Dorsolateral prefrontal cortex (tissue), 120 donors: ENCODE measurements at regions of chr6 and their contacts with region 1.

Region 1: GRCh38 chr6:160455541-160456213 is 107.5 kb downstream of the SLC22A3 start:
- DNase-seq: peak in 9 of 10 donors; percentile 12 to 77 (median 55)
- H3K4me3 ChIP-seq: peak overlapping the region in 49 of 59 donors; percentile 6 to 58 (median 32)
- H3K27ac ChIP-seq: peak overlapping the region in 16 of 59 donors; percentile 6 to 70 (median 45)
- H3K27me3 ChIP-seq: no peaks in the 10 kb centered on the region
- CTCF ChIP-seq: peak; percentile 73 to 99 (median 96)

Region 2: GRCh38 chr6:159862103-159862502 is 593.6 kb before region 1 on chr6:
- intact Hi-C with region 1: loop called (anchors 5 to 10 kb)
- DNase-seq: no peak
- H3K4me3 ChIP-seq: no peak overlapping the region
- H3K27ac ChIP-seq: no peak overlapping the region
- H3K27me3 ChIP-seq: peaks cover 0 to 9% (median 0%) of the 10 kb centered on the region in 45 donors
- CTCF ChIP-seq: no peak

Region 3: DNA sequence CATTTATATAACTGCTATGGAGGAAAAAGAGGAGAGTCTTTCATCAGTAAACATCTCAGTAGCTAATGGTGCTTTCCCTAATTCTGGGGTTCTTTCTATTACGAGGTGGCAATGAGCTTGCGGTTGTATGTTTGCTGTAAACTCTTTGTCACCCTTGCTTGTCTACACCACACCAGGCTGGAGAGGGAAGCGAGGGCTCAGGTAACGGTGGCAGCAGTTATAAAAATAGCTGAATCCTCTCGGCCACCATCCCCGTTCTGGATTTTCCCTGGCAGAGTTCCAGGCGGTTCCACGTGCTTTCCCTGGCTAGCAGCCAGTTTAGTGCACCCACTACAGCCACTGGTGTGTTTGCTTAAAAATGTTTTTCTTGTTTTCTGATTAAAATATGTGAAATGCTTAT is 525.9 kb before region 1 on chr6:
- intact Hi-C with region 1: loop called in 1 of 2 experiments (anchors 10 kb)
- DNase-seq: no peak
- H3K4me3 ChIP-seq: no peak overlapping the region
- H3K27ac ChIP-seq: no peak overlapping the region
- H3K27me3 ChIP-seq: no peaks in the 10 kb centered on the region
- CTCF ChIP-seq: no peak

Region 4: DNA sequence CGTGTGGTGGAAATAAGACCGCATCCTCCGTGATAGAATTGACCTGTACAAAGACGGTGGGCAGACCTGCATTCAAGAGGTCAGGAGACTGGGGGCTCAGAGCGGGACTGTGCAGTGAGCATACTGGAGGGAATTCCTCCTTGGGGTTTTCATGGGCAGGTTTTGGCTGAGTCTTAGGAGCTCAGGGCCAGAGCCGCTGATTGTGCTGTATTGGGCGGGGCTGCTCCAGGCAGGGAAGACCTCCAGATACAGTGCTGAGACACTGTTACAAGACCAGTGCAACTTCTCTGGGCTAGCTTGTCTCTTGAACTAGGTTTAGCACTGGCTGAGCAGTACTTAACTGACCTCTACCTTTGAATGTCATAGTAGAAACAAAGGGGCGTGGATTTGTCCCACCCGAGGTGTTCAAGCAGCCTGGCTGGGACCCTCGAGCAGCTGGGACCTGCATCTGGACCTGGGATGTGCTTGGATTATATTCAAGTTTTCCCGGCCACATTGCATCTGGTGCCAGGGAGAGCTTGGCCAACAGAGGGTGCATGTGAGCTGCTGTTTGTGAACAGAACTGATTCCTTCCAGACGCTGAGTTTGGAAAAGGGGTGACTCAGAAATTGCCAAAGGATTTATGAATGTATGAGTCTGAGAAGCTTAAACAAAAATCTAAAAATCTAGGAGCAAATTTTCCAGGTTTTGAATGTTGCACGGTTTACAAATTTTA is 367.5 kb before region 1 on chr6:
- intact Hi-C with region 1: loop called (anchors 2 to 5 kb)
- DNase-seq: peak in 9 of 10 donors; percentile 23 to 75 (median 66)
- H3K4me3 ChIP-seq: peak overlapping the region in 1 of 59 donors; percentile 7
- H3K27ac ChIP-seq: peak overlapping the region in 5 of 59 donors; percentile 11 to 65 (median 35)
- H3K27me3 ChIP-seq: no peaks in the 10 kb centered on the region
- CTCF ChIP-seq: peak in 55 of 56 donors; percentile 34 to 80 (median 67)

Region 5: GRCh38 chr6:160137989-160138835 is 317.5 kb before region 1 on chr6:
- intact Hi-C with region 1: loop called (anchors 2 to 5 kb)
- DNase-seq: peak in 5 of 10 donors; percentile 28 to 64 (median 60)
- H3K4me3 ChIP-seq: no peak overlapping the region
- H3K27ac ChIP-seq: no peak overlapping the region
- H3K27me3 ChIP-seq: no peaks in the 10 kb centered on the region
- CTCF ChIP-seq: peak; percentile 48 to 80 (median 69)

Region 6: GRCh38 chr6:160328447-160328846 is 127.2 kb before region 1 on chr6:
- intact Hi-C with region 1: no loop called
- DNase-seq: no peak
- H3K4me3 ChIP-seq: no peak overlapping the region
- H3K27ac ChIP-seq: peak overlapping the region in 1 of 59 donors; percentile 4
- H3K27me3 ChIP-seq: peaks cover 0 to 16% (median 0%) of the 10 kb centered on the region in 45 donors
- CTCF ChIP-seq: no peak

Region 7: DNA sequence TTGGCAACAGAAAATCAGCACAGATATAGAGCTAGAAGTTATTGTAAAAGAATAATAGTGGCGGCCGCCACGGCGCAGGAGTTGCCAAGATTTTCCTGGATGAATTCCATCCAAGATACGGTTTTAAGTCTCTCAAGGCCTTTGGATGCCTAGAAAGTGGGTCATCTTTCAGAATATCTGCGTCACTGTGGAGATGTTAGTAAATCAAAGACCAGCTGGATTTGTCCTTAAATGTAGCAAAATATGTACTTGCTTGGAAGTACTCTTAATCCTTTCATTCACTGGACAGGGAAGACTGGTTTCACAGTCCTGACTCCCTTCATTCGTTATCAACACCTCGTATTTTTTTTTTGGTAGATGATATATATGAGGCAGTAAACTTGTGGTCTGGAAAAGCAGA is 24.5 kb before region 1 on chr6:
- intact Hi-C with region 1: no loop called
- DNase-seq: no peak
- H3K4me3 ChIP-seq: no peak overlapping the region
- H3K27ac ChIP-seq: peak overlapping the region in 11 of 59 donors; percentile 0 to 37 (median 8)
- H3K27me3 ChIP-seq: peaks cover 0 to 28% (median 0%) of the 10 kb centered on the region in 45 donors
- CTCF ChIP-seq: no peak

Region 8: GRCh38 chr6:160534050-160534696 is 78.5 kb after region 1 on chr6:
- intact Hi-C with region 1: loop called (anchors 1 kb)
- DNase-seq: peak in 9 of 10 donors; percentile 16 to 68 (median 47)
- H3K4me3 ChIP-seq: peak overlapping the region in 42 of 59 donors; percentile 1 to 59 (median 30)
- H3K27ac ChIP-seq: no peak overlapping the region
- H3K27me3 ChIP-seq: peaks cover 0 to 3% (median 0%) of the 10 kb centered on the region in 45 donors
- CTCF ChIP-seq: peak; percentile 85 to 99 (median 96)

Region 9: GRCh38 chr6:160573943-160574342 is 118.3 kb after region 1 on chr6:
- intact Hi-C with region 1: no loop called
- DNase-seq: no peak
- H3K4me3 ChIP-seq: no peak overlapping the region
- H3K27ac ChIP-seq: no peak overlapping the region
- H3K27me3 ChIP-seq: no peaks in the 10 kb centered on the region
- CTCF ChIP-seq: no peak